Activated T-helper 2 cell treated with anti-CD3 and anti-CD28 coated beads, Interferon-gamma antibody, Interleukin-2, Interleukin-4, amounts not matched to agents 10 μg/mL and 5 μg/mL and 100 μg/mL, durations not matched to agents 14 hours and 24 hours and 36 hours (primary cell): ENCODE measurements at regions of chr10 and their contacts with region 1.

Region 1: DNA sequence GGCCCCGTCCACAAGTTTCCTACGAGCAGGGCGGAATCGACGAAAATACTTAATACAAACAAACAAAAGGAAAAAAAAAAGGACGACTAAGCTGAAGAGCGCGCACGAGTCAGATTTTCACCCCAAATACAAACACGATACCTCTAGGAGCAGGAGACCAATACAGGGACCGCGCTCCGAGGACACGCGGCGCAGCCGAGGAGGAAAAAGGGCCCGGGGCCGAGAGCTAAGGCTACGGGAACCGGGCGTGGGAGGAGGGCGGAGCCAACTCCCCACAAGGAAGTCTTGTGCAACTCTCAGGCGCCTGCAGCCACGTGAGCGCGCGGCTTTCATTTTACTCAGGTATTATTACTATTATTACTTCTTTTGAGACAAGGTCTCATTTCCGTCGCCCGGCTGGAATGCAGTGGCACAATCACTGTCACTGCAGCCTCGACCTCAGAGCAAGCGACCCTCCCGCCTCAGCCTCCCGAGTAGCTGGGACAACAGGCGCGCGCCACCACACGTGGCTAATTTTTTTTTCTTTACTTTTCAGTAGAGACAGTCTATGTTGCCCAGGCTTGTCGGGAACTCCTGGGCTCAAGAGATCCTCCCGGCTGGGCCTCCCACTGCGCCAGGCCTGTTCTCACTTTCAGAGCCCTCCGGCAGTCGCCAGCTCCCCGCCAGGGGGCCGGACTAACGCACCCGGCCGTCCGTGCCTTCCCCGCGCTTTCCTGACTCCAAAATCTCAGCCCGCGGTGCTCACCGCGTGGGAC is 1.2 kb downstream of the HNRNPF start:
- DNase-seq: peak; percentile 81
- H3K4me3 Mint-ChIP-seq: peak overlapping the region; percentile 95
- H3K27ac Mint-ChIP-seq: peak overlapping the region; percentile 99
- H3K4me1 Mint-ChIP-seq: peaks cover 34% of the 10 kb centered on the region
- H3K27me3 Mint-ChIP-seq: no peaks in the 10 kb centered on the region

Region 2: GRCh38 chr10:43120929-43121314 is 286.8 kb before region 1 on chr10:
- intact Hi-C with region 1: loop called (anchors 5 kb)
- DNase-seq: peak; percentile 72
- H3K4me3 Mint-ChIP-seq: peak overlapping the region; percentile 53
- H3K27ac Mint-ChIP-seq: peak overlapping the region; percentile 88
- H3K4me1 Mint-ChIP-seq: peaks cover 33% of the 10 kb centered on the region
- H3K27me3 Mint-ChIP-seq: no peaks in the 10 kb centered on the region

Region 3: GRCh38 chr10:43361986-43362839 is 45.5 kb before region 1 on chr10:
- intact Hi-C with region 1: loop called (anchors 1 kb)
- DNase-seq: peak; percentile 97
- H3K4me3 Mint-ChIP-seq: peak overlapping the region; percentile 97
- H3K27ac Mint-ChIP-seq: peak overlapping the region; percentile 97
- H3K4me1 Mint-ChIP-seq: peaks cover 20% of the 10 kb centered on the region
- H3K27me3 Mint-ChIP-seq: no peaks in the 10 kb centered on the region

Region 4: GRCh38 chr10:43420369-43421200 is 12.8 kb after region 1 on chr10:
- intact Hi-C with region 1: loop called (anchors 1 kb)
- DNase-seq: peak; percentile 80
- H3K4me3 Mint-ChIP-seq: peak overlapping the region; percentile 82
- H3K27ac Mint-ChIP-seq: peak overlapping the region; percentile 98
- H3K4me1 Mint-ChIP-seq: peaks cover 30% of the 10 kb centered on the region
- H3K27me3 Mint-ChIP-seq: no peaks in the 10 kb centered on the region

Region 5: DNA sequence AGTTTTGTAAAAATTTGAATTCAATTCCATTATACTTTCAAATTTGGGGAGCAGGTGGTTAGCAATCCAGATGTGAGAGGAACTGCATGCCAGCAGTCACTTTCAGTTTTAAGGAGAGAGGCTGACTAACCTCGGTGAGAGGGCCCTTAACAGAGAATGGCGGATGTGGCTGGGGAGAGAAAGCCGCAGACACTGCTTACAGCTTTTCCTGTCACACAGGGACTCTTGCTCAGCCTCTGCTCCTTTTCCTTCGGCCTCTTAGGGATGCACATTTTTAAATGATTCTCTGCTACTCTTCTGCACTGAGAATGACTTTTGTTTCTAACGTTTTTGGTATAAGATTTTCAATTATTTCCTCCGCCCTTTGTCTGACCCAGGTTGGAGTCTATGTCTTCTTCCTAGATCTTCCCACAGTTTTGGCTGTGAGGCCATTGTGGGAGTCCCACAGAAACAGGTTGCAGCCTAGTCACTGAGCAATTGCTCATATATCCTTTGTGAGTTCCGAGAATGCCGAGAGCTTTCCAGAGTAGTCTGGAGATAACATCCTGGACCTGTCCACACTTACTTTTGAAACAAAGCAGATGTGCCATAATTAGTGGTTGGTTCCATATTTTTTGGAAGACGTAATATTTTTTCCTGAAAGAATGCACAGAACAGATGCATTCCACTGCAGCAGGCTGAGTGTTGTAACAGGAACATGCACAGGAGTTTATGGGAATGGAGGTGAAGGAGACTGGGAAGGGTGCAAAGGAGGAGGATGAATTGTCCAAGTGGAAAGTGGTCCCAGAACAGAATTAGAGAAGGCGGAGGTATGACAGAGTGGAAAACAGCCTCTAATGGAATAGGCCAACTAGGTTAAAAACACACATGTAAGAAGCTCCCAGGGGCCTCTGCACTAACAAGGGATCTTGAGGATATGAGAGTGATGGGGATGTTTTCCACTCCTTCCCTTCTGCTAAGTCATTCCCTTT is 408.9 kb after region 1 on chr10:
- intact Hi-C with region 1: loop called (anchors 10 kb)
- DNase-seq: peak; percentile 75
- H3K4me3 Mint-ChIP-seq: peak overlapping the region; percentile 10
- H3K27ac Mint-ChIP-seq: peak overlapping the region; percentile 87
- H3K4me1 Mint-ChIP-seq: peaks cover 45% of the 10 kb centered on the region
- H3K27me3 Mint-ChIP-seq: no peaks in the 10 kb centered on the region